ENCODE measurements at regions of chr5 and their contacts with region 1.

Region 1: GRCh38 chr5:148807845-148808244 is 18.6 kb upstream of the ADRB2 start:
- DNase-seq: no peak
- H3K4me3 ChIP-seq: no peak overlapping the region
- H3K27me3 ChIP-seq: no peaks in the 10 kb centered on the region
- CTCF ChIP-seq: no peak

Region 2: DNA sequence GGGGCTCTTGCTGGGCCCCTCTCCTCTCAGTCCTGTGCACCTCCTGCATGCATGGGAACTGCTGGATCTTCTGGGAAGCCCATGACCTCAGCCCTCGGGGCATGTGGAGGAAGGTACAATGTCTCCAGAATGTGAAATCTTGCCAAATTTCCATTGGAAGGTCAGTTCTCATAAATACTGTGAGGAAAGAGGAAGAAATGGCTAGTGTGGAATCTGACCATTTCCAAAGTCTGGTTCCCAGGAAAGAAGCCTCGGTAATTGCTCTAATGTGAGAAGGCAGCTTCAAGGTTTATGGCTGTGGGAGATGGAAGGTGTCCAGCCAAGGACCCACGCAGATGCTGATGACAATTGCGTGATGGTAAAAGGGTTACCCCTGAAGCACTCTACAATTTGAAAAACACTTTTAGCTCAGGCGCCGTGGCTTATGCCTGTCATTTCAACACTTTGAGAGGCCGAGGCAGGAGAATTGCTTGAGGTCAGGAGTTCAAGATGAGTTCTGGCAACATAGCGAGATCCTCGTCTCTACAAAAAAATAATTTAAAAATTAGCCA is 579.3 kb after region 1 on chr5:
- CTCF ChIA-PET with region 1: no interaction called
- POLR2A ChIA-PET with region 1: interaction called, 11 read pairs
- DNase-seq: peak; percentile 97
- H3K4me3 ChIP-seq: no peak overlapping the region
- H3K27me3 ChIP-seq: no peaks in the 10 kb centered on the region
- CTCF ChIP-seq: no peak

Measured in BJ (cell line).